Esophagus muscularis mucosa (tissue), 4 donors: ENCODE measurements at regions of chr2 and their contacts with region 1.

Region 1: DNA sequence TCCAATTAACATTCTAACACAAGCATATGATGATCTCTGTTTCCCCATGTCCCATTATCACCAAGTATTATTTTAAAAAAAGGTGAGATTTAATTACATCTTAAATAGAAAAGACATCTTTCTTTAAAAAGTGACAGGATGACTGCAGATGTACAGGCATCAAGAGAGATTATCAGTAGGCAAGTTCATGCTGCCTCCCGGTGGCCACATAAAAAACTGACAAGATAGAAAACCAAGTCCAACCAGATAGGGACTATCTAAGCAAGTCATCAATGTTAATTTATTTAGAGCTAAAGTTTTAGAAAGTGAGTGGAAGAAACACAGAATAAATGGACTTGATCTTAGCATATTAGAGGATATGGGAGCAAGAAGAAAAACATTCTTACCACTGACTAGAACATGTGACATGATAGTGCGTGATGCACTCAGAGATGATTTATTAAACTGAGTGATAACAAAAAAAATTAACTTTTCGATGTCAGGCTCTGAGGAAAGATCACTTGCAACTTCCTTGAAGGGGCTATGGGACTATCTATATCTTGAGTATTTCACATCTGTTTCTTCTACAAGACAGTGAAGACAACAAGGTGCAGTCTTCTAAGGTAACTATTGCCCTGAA is 5.4 kb upstream of the TDRD15 start:
- DNase-seq: no peak
- H3K4me3 ChIP-seq: no peak overlapping the region
- H3K27ac ChIP-seq: no peak overlapping the region
- H3K4me1 ChIP-seq: no peaks in the 10 kb centered on the region
- H3K27me3 ChIP-seq: no peaks in the 10 kb centered on the region
- CTCF ChIP-seq: peak; percentile 53 to 64 (median 55)
- EP300 ChIP-seq: no peak
- POLR2A ChIP-seq: no peak

Region 2: GRCh38 chr2:20593072-20594034 is 525.1 kb before region 1 on chr2:
- intact Hi-C with region 1: no loop called
- DNase-seq: no peak
- H3K4me3 ChIP-seq: no peak overlapping the region
- H3K27ac ChIP-seq: peak overlapping the region; percentile 35 to 76 (median 60)
- H3K4me1 ChIP-seq: peaks cover 66 to 87% (median 80%) of the 10 kb centered on the region in 4 donors
- H3K27me3 ChIP-seq: no peaks in the 10 kb centered on the region
- CTCF ChIP-seq: no peak
- EP300 ChIP-seq: no peak
- POLR2A ChIP-seq: no peak

Region 3: DNA sequence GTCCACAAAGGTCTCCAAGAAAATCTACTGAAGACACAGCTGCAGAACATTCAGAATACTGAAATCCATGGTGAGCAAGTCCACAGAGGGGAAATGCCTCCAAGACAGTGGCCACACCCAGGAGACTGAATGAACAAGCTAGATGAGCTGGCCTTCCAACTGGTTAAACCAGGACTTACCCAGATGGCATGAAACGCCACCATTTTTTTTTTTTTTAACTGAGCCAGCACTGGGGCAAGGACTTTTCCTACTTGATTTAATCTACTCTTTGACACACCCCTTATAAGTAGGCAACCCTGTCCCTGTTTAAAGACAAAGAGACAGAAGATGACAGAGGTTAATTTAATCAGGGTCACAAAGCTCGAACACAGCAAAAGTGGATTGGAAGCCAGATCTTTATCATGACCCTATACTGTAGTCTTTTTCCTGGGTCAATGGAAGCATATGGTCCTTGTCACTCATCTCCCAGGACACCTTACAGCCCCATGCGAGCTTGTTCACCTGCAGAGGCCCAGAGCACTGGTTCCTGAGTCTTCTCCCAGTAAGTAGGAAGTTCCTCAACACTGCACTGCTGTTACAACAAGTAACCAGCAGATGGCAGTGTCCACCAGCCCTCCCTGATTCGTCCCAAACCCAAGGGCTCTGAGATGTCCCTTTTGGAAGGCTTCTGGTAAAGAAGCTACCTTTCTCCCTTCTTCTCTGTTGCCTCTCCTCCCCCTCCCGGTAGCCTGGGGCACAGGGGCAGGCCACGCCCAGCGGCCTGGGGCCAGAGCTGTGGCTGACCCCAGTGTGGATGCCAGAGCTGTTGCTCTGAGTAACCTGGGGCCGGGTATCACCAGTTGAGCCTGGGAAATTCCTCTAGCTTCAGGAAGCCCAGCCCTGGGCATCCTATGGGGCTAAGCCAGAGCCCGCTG is 457.1 kb before region 1 on chr2:
- intact Hi-C with region 1: loop called (anchors 2 kb)
- DNase-seq: no peak
- H3K4me3 ChIP-seq: no peak overlapping the region
- H3K27ac ChIP-seq: no peak overlapping the region
- H3K4me1 ChIP-seq: peaks cover 10 to 32% (median 27%) of the 10 kb centered on the region in 4 donors
- H3K27me3 ChIP-seq: peaks cover 4 to 58% (median 23%) of the 10 kb centered on the region in 4 donors
- CTCF ChIP-seq: peak; percentile 93 to 98 (median 98)
- EP300 ChIP-seq: no peak
- POLR2A ChIP-seq: no peak

Region 4: GRCh38 chr2:20682167-20682920 is 436.1 kb before region 1 on chr2:
- intact Hi-C with region 1: loop called (anchors 5 kb)
- DNase-seq: peak; percentile 60
- H3K4me3 ChIP-seq: no peak overlapping the region
- H3K27ac ChIP-seq: no peak overlapping the region
- H3K4me1 ChIP-seq: no peaks in the 10 kb centered on the region
- H3K27me3 ChIP-seq: no peaks in the 10 kb centered on the region
- CTCF ChIP-seq: peak in 2 of 3 experiments; percentile 28 to 46
- EP300 ChIP-seq: no peak
- POLR2A ChIP-seq: no peak

Region 5: GRCh38 chr2:20781656-20782265 is 336.6 kb before region 1 on chr2:
- intact Hi-C with region 1: loop called (anchors 5 kb)
- DNase-seq: no peak
- H3K4me3 ChIP-seq: no peak overlapping the region
- H3K27ac ChIP-seq: no peak overlapping the region
- H3K4me1 ChIP-seq: no peaks in the 10 kb centered on the region
- H3K27me3 ChIP-seq: no peaks in the 10 kb centered on the region
- CTCF ChIP-seq: peak; percentile 51 to 67 (median 57)
- EP300 ChIP-seq: no peak
- POLR2A ChIP-seq: no peak

Region 6: GRCh38 chr2:20962939-20963557 is 155.4 kb before region 1 on chr2:
- intact Hi-C with region 1: loop called (anchors 5 kb)
- DNase-seq: no peak
- H3K4me3 ChIP-seq: no peak overlapping the region
- H3K27ac ChIP-seq: no peak overlapping the region
- H3K4me1 ChIP-seq: peaks cover 0 to 18% (median 13%) of the 10 kb centered on the region in 4 donors
- H3K27me3 ChIP-seq: peaks cover 0 to 11% (median 0%) of the 10 kb centered on the region in 4 donors
- CTCF ChIP-seq: peak; percentile 86 to 88 (median 88)
- EP300 ChIP-seq: no peak
- POLR2A ChIP-seq: no peak

Region 7: DNA sequence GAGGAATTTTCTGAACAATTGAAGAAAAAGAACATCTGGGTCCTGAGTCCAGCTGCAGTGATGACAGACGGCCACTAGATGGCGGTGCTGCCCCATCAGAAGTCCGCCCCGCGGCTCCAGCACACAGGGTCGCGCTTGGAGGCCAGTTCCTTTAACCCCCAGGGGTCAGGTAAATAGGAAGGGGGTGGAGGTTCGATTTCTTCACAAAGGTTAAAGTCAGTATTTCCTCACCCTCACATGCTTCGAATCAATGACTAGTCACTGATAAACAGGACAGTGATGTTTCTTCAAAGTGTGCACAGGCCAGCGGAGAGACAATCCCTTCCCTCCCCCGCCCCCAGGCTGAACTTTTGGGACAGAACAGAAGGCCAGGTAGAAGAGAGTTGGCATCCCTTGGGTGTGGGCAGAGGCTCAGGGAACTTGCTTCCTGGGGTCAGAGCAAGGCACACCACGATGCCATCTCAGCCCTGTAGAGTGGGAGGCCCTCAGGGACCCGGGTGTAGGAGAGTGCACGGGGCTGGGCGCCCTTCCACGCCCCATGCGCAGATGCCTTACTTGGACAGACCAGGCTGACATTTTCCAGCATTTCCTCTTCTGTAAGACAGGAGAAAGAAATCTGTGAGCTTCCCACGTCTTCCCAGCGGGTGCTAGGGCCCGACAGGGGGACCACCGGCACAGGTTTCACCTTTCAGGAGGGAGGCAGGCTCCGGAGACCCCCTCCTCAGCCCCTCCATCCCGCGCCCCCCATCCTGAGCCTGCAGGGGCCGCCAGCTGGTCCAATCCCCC is 75.3 kb before region 1 on chr2:
- intact Hi-C with region 1: loop called (anchors 1 kb)
- DNase-seq: no peak
- H3K4me3 ChIP-seq: peak overlapping the region; percentile 16 to 37 (median 24)
- H3K27ac ChIP-seq: peak overlapping the region in 3 of 4 donors; percentile 28 to 65 (median 63)
- H3K4me1 ChIP-seq: peaks cover 16 to 55% (median 42%) of the 10 kb centered on the region in 4 donors
- H3K27me3 ChIP-seq: peaks cover 0 to 9% (median 0%) of the 10 kb centered on the region in 4 donors
- CTCF ChIP-seq: peak in 2 of 3 experiments; percentile 98
- EP300 ChIP-seq: no peak
- POLR2A ChIP-seq: no peak

Region 8: GRCh38 chr2:21890041-21890440 is 771.6 kb after region 1 on chr2:
- intact Hi-C with region 1: no loop called
- DNase-seq: no peak
- H3K4me3 ChIP-seq: no peak overlapping the region
- H3K27ac ChIP-seq: no peak overlapping the region
- H3K4me1 ChIP-seq: no peaks in the 10 kb centered on the region
- H3K27me3 ChIP-seq: no peaks in the 10 kb centered on the region
- CTCF ChIP-seq: no peak
- EP300 ChIP-seq: no peak
- POLR2A ChIP-seq: no peak